Dorsolateral prefrontal cortex (tissue), 120 donors: ENCODE measurements at regions of chr10 and their contacts with region 1.

Region 1: DNA sequence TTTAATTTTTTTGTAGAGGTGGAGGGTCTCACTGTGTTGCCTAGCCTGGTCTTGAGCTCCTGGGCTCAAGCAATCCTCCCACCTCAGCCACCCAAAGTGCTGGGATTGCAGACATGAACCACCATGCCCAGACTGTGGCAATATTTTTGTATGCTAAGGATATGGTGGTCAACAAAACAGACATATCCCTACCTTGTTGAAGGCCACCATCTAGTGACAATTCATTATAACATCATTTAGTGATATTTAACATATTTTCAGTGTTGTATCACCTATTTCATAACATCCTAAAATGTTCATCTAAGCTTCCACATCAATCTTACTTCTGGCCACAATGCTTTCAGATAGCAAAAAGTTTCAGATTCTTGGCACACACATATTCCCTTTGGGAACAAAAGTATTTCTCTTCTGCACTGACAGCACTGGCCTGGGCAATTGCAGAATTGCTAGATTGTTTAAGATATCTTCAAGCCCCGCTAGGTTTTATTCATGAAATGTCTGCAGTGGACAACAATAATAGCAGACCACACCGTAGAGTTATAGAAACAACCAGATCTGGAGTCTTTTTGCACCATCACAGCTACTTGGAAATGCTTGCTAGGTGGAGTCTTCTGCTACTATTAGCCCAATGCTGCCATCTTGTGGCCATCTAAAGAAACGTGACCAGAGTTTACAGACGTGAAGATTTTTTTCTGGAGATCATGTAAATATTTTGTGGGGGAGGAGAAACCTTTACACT is 58.4 kb downstream of the DNAJC12 start:
- DNase-seq: peak in 6 of 10 donors; percentile 57 to 85 (median 71)
- H3K4me3 ChIP-seq: peak overlapping the region in 19 of 59 donors; percentile 6 to 43 (median 27)
- H3K27ac ChIP-seq: peak overlapping the region in 49 of 59 donors; percentile 6 to 87 (median 71)
- H3K27me3 ChIP-seq: no peaks in the 10 kb centered on the region
- CTCF ChIP-seq: peak; percentile 78 to 98 (median 88)

Region 2: DNA sequence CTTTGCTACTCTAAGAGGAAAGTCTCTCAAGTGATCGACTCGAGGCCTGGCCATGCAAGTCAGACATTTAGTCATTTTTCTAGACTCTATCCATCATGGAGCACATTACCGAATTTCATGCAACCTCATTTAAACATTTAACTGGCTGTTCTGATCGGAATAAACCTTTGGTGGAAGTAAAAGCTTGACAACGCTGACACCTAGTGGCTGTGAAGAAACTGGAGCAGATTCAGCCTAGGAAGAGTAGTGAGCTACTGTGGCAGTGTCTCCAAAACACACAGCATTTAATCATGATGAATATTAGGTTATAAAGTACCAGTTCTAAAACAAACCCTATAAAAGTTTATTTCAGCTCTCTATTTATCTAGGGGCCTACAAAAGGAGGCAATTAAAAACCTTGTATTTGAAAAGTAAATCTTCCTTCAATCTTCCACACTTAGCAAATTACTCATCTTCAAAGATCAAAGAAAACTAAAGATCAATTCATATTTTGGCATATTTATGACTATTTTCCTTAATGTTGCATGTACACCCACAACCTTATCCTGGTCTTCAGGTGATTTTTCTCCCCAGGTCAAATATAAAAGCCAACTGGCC is 258.6 kb before region 1 on chr10:
- intact Hi-C with region 1: loop called in 1 of 2 experiments (anchors 10 kb)
- DNase-seq: peak in 6 of 10 donors; percentile 35 to 47 (median 41)
- H3K4me3 ChIP-seq: peak overlapping the region in 2 of 59 donors; percentile 18 to 19
- H3K27ac ChIP-seq: peak overlapping the region in 29 of 59 donors; percentile 1 to 73 (median 44)
- H3K27me3 ChIP-seq: no peaks in the 10 kb centered on the region
- CTCF ChIP-seq: peak; percentile 56 to 93 (median 85)

Region 3: GRCh38 chr10:67539312-67539711 is 240.3 kb before region 1 on chr10:
- intact Hi-C with region 1: loop called in 1 of 2 experiments (anchors 10 kb)
- DNase-seq: no peak
- H3K4me3 ChIP-seq: no peak overlapping the region
- H3K27ac ChIP-seq: no peak overlapping the region
- H3K27me3 ChIP-seq: no peaks in the 10 kb centered on the region
- CTCF ChIP-seq: no peak

Region 4: DNA sequence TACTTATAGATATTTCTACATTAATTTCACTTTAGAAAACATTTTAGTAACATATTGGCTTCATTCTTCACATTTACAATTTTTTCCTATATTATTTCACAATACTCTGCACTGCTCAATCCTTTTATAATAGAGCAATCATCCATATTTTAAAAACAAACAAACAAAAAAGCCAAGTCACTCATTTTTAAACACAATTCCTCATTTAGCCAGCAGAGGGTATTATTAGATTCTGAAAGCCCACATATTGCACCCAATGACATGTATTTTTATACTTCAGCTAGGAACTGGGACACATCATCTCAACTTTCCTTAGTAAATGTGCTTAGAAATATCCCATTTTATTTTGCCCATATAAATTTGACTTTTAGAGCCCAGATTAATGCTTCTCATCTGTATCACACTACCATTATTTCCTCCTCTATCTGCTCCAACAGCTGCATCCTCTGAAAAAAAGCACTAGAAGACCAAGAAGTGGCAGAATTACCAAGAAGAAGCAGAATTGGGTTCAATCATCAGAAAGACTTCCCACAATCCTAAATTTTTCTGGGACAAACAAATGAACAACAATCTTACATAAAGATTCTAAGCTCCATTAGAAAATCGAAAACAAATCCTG is 113.1 kb before region 1 on chr10:
- intact Hi-C with region 1: loop called (anchors 2 to 5 kb)
- DNase-seq: no peak
- H3K4me3 ChIP-seq: peak overlapping the region in 5 of 59 donors; percentile 2 to 74 (median 67)
- H3K27ac ChIP-seq: peak overlapping the region in 58 of 59 donors; percentile 72 to 98 (median 90)
- H3K27me3 ChIP-seq: no peaks in the 10 kb centered on the region
- CTCF ChIP-seq: peak in 55 of 56 donors; percentile 53 to 89 (median 73)